K562 (cell line): ENCODE measurements at regions of chr15 and their contacts with region 1.

Region 1: GRCh38 chr15:90241343-90242192 is 7.6 kb downstream of the GDPGP1 start:
- DNase-seq: peak in 2 of 4 experiments; percentile 47 to 80
- ATAC-seq: peak; percentile 82
- H3K4me3 ChIP-seq: no peak overlapping the region
- H3K27ac ChIP-seq: peak overlapping the region; percentile 74
- H3K4me1 ChIP-seq: peaks cover 21 to 27% of the 10 kb centered on the region in 2 experiments
- H3K27me3 ChIP-seq: no peaks in the 10 kb centered on the region
- CTCF ChIP-seq: no peak
- EP300 ChIP-seq: peak; percentile 45
- POLR2A ChIP-seq: no peak
- RAD21 ChIP-seq: no peak

Region 2: DNA sequence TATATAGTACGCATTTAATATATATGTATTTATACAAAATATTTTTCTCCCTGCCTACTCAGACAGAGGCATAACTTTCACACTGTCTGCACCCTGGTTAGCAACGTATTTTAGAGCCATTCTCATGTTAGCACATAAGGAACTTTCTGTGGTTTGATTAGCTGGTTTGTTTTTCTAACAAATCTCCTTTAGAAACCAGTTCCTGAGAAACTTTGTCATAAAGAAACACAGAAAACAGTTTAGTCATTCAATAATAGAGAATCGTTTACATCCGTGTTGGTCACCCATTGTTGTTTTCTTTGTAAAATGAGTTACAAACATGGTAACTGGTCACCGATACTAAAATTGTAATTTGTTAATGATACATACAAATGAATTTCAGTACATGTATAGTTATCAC is 18.0 kb after region 1 on chr15:
- CTCF ChIA-PET with region 1: no interaction called
- POLR2A ChIA-PET with region 1: interaction called, 13 read pairs
- in situ Hi-C with region 1: no loop called
- intact Hi-C with region 1: no loop called
- DNase-seq: no peak
- ATAC-seq: no peak
- H3K4me3 ChIP-seq: no peak overlapping the region
- H3K27ac ChIP-seq: no peak overlapping the region
- H3K4me1 ChIP-seq: peaks cover 0 to 4% of the 10 kb centered on the region in 2 experiments; a peak in 3 of 5 replicates
- H3K27me3 ChIP-seq: 0 out of 5 replicates have a peak, but pooled peaks cover 0 to 4% of the 10 kb centered on the region in 2 experiments
- CTCF ChIP-seq: no peak
- EP300 ChIP-seq: no peak
- POLR2A ChIP-seq: no peak
- RAD21 ChIP-seq: no peak